GM12878 (cell line): ENCODE measurements at regions of chr21 and their contacts with region 1.

Region 1: GRCh38 chr21:45140346-45140940 is 66.1 kb downstream of the ADARB1 start:
- DNase-seq: no peak
- ATAC-seq: peak; percentile 98
- H3K4me3 ChIP-seq: no peak overlapping the region
- H3K27ac ChIP-seq: no peak overlapping the region
- H3K4me1 ChIP-seq: no peaks in the 10 kb centered on the region
- H3K27me3 ChIP-seq: peaks cover 0 to 9% of the 10 kb centered on the region in 2 experiments; a peak in 1 of 4 replicates
- CTCF ChIP-seq: peak; percentile 86 to 98 (median 90); a peak in 5 of 6 replicates
- EP300 ChIP-seq: no peak
- POLR2A ChIP-seq: no peak
- RAD21 ChIP-seq: peak; percentile 90

Region 2: DNA sequence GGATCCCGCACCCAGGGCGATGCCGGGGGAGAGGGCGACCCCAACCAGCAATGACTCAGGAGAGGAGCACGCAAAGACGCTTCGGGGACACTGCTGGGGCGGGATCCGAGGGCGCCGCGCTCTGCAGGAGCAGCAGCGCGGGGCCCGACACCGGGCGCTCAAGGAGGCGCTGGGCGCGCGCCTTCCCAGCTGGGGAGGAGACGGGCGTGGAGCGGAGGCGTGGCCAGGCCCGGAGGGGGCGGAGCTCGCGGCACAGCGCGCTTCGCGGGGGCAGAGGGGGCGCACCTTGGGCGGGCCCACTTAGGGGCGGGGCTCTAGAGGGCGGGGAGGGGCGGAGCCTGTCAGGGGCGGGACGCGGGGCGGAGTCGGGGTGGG is 322.9 kb before region 1 on chr21:
- CTCF ChIA-PET with region 1: no interaction called
- POLR2A ChIA-PET with region 1: no interaction called
- RAD21 ChIA-PET with region 1: no interaction called
- SMC1A ChIA-PET with region 1: no interaction called
- in situ Hi-C with region 1: no loop called
- intact Hi-C with region 1: no loop called
- DNase-seq: no peak
- ATAC-seq: peak; percentile 91
- H3K4me3 ChIP-seq: peak overlapping the region; percentile 90
- H3K27ac ChIP-seq: peak overlapping the region; percentile 81
- H3K4me1 ChIP-seq: no peaks in the 10 kb centered on the region
- H3K27me3 ChIP-seq: no peaks in the 10 kb centered on the region
- CTCF ChIP-seq: no peak
- EP300 ChIP-seq: no peak
- POLR2A ChIP-seq: no peak
- RAD21 ChIP-seq: 0 out of 2 replicates have a peak, but pooled peaks have one; percentile 1

Region 3: DNA sequence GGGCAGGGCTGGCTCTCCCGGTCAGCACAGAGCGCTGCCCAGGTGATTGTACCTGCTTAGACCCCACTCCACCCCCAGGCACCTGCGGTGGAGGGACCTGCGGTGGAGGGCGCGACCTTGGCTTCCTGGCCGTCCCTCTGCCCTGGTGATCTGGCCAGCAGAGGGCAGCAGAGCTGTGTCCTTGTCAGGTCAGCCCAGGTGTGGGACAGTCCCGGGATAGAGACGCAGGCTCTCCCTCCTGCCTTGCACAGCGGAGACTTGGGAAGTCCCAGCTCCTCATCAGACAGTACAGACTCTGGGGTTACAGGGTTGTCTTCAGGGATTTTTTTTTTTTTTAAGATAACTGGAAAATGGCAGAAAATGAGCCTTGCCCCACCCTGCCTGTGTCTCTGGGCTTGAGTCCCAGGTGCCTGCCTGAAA is 190.7 kb before region 1 on chr21:
- CTCF ChIA-PET with region 1: interaction called, 219 read pairs
- POLR2A ChIA-PET with region 1: no interaction called
- RAD21 ChIA-PET with region 1: interaction called, 104 read pairs
- SMC1A ChIA-PET with region 1: interaction called, 48 read pairs
- in situ Hi-C with region 1: no loop called
- intact Hi-C with region 1: loop called (anchors 1 kb)
- DNase-seq: no peak
- ATAC-seq: peak; percentile 96
- H3K4me3 ChIP-seq: no peak overlapping the region
- H3K27ac ChIP-seq: no peak overlapping the region
- H3K4me1 ChIP-seq: no peaks in the 10 kb centered on the region
- H3K27me3 ChIP-seq: no peaks in the 10 kb centered on the region
- CTCF ChIP-seq: peak; percentile 90 to 96 (median 95); a peak in 5 of 6 replicates
- EP300 ChIP-seq: no peak
- POLR2A ChIP-seq: no peak
- RAD21 ChIP-seq: peak; percentile 91

Region 4: DNA sequence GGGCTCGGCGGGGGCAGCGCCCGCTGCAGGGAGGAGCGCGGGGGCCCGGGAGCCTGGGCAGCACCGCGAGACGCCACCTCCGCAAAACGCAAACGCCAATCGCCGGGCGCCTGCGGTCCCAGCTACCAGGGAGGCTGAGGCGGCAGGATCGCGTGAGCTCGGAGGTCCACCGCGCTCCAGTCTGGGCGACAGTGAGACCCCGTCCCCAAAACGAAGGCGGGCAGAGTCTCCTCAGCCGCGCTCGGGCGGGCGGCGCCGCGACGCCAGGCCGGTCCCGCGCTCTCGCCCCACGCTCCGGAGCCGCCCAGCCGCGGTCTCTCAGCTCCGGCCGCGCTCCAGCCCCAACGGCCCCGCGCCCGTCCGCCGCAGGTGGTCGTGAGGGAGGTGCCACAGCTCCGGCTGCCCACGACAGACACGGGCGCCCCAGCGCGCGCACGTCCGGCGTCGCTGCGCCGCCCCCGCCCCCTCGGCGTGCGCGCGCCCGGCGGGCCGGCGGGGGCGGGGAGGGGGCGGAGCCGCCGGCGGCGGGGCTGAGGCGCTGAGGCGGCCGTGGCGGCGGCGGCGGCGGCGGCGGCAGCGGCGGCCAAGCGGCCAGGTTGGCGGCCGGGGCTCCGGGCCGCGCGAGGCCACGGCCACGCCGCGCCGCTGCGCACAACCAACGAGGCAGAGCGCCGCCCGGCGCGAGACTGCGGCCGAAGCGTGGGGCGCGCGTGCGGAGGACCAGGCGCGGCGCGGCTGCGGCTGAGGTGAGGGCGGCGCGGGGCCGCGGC is 66.2 kb before region 1 on chr21 and contains the start of gene ADARB1:
- CTCF ChIA-PET with region 1: interaction called, 65 read pairs
- POLR2A ChIA-PET with region 1: no interaction called
- RAD21 ChIA-PET with region 1: interaction called, 7 read pairs
- SMC1A ChIA-PET with region 1: interaction called, 13 read pairs
- in situ Hi-C with region 1: no loop called
- intact Hi-C with region 1: no loop called
- DNase-seq: no peak
- ATAC-seq: peak; percentile 43
- H3K4me3 ChIP-seq: peak within 1 kb of the TSS; percentile 80; the same call in 1 of the 2 replicates
- H3K27ac ChIP-seq: no peak within 1 kb of the TSS
- H3K4me1 ChIP-seq: 0 out of 2 replicates have a peak, but pooled peaks cover 5% of the 10 kb centered on the region
- H3K27me3 ChIP-seq: peaks cover 0 to 9% of the 10 kb centered on the region in 2 experiments; a peak in 2 of 4 replicates
- CTCF ChIP-seq: no peak
- EP300 ChIP-seq: no peak
- POLR2A ChIP-seq: peak; percentile 76
- RAD21 ChIP-seq: no peak
- polyA plus RNA-seq, gene ADARB1: 5.7 to 9.0 TPM

Region 5: DNA sequence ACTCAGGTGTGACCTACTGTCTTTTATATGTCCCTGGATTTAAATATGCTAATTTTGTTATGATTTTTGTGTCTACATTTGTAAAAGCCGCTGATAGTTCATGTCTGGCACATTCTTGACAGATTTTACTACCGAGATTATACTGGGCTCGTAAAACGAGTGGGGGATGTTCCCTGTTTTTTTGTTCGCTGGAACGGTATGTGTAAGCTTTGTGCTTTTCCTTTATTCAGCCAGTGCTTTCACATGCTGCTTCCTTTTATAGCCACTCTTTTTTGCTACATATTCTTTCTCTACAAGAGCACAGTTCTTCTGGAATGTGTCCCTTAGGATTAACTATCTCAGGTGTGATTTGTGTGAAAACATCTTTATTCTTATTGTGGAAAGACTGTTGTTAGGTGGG is 19.5 kb before region 1 on chr21:
- CTCF ChIA-PET with region 1: interaction called, 236 read pairs
- POLR2A ChIA-PET with region 1: no interaction called
- RAD21 ChIA-PET with region 1: interaction called, 19 read pairs
- SMC1A ChIA-PET with region 1: interaction called, 39 read pairs
- in situ Hi-C with region 1: no loop called
- intact Hi-C with region 1: no loop called
- DNase-seq: no peak
- ATAC-seq: no peak
- H3K4me3 ChIP-seq: no peak overlapping the region
- H3K27ac ChIP-seq: no peak overlapping the region
- H3K4me1 ChIP-seq: peaks cover 18% of the 10 kb centered on the region
- H3K27me3 ChIP-seq: no peaks in the 10 kb centered on the region
- CTCF ChIP-seq: no peak
- EP300 ChIP-seq: no peak
- POLR2A ChIP-seq: no peak
- RAD21 ChIP-seq: no peak

Region 6: DNA sequence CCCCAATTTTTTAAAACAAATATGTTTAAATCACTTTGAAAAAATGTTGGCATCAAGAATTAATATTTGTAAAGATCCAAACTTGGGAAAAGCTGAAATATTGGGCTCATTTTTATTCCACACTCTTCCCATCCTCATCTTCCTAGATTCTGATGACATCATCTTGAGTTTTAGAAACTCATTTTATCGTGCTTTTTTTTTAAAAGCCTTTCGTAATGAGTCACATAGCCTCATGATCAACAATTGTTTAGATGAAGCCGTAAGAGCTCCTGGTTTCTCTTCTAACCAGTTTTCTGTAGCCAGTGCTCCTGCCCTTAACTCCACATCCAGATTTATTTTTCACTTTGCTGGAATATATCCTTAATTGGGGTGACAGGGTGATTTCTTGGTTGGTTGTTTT is 68.6 kb after region 1 on chr21:
- CTCF ChIA-PET with region 1: interaction called, 15 read pairs
- POLR2A ChIA-PET with region 1: no interaction called
- RAD21 ChIA-PET with region 1: no interaction called
- SMC1A ChIA-PET with region 1: interaction called, 3 read pairs
- in situ Hi-C with region 1: no loop called
- intact Hi-C with region 1: no loop called
- DNase-seq: no peak
- ATAC-seq: peak; percentile 64
- H3K4me3 ChIP-seq: no peak overlapping the region
- H3K27ac ChIP-seq: no peak overlapping the region
- H3K4me1 ChIP-seq: peaks cover 34% of the 10 kb centered on the region
- H3K27me3 ChIP-seq: no peaks in the 10 kb centered on the region
- CTCF ChIP-seq: no peak
- EP300 ChIP-seq: peak; percentile 32 to 43; a peak in 1 of 4 replicates
- POLR2A ChIP-seq: no peak
- RAD21 ChIP-seq: no peak

Region 7: GRCh38 chr21:45439161-45439872 is 298.9 kb after region 1 on chr21:
- CTCF ChIA-PET with region 1: interaction called, 20 read pairs
- POLR2A ChIA-PET with region 1: no interaction called
- RAD21 ChIA-PET with region 1: interaction called, 19 read pairs
- SMC1A ChIA-PET with region 1: interaction called, 11 read pairs
- in situ Hi-C with region 1: no loop called
- intact Hi-C with region 1: loop called (anchors 1 kb)
- DNase-seq: no peak
- ATAC-seq: peak; percentile 98
- H3K4me3 ChIP-seq: no peak overlapping the region
- H3K27ac ChIP-seq: no peak overlapping the region
- H3K4me1 ChIP-seq: no peaks in the 10 kb centered on the region
- H3K27me3 ChIP-seq: no peaks in the 10 kb centered on the region
- CTCF ChIP-seq: peak; percentile 88 to 95 (median 93); a peak in 5 of 6 replicates
- EP300 ChIP-seq: no peak
- POLR2A ChIP-seq: no peak
- RAD21 ChIP-seq: peak; percentile 94